ENCODE measurements at regions of chr1 and their contacts with region 1.

Region 1: GRCh38 chr1:2044510-2045319 is 5.5 kb upstream of the PRKCZ start:
- DNase-seq: peak; percentile 80
- ATAC-seq: peak; percentile 9
- H3K4me3 Mint-ChIP-seq: peak overlapping the region; percentile 27
- H3K27ac Mint-ChIP-seq: no peak overlapping the region
- H3K4me1 Mint-ChIP-seq: peaks cover 23% of the 10 kb centered on the region
- H3K27me3 Mint-ChIP-seq: peaks cover 13% of the 10 kb centered on the region; the same call in 1 of the 2 replicates
- CTCF ChIP-seq: peak; percentile 94

Region 2: DNA sequence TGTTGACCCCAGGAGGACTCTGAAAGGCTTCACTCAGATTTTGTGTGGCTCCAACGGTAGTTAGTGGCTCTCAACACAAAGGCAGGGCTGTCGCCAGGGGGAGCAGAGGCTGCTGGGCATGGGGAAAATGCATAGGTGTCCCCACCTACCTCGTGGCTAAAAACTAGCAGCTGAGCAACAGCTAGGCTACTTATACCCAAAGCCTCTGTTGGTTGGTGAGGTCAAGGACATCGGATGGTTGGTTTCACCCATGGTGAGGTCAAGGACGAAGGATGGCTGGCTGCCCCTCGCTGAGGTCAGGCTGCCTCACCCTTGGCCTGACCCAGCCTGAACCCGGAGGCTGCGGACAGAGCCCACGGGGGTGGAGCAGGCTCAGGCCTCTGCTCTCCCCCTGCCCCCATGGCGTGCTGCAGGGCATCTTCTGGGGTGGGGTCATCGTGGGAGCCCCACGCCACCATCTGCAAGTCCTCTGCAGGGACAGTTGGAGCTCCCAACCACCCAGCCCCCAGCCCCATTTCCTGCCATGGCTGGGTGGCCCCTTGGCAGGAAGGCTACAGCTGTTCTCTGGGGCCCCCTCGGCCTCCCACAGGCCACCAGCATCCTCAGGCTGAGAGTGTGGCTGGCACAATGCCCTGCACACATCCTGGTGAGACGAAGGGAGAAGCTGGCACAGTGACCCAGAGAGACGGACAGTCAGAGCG is 145.3 kb before region 1 on chr1:
- CTCF ChIA-PET with region 1: interaction called, 14 read pairs
- POLR2A ChIA-PET with region 1: no interaction called
- DNase-seq: no peak
- ATAC-seq: peak; percentile 35
- H3K4me3 Mint-ChIP-seq: no peak overlapping the region
- H3K27ac Mint-ChIP-seq: no peak overlapping the region
- H3K4me1 Mint-ChIP-seq: peaks cover 13% of the 10 kb centered on the region
- H3K27me3 Mint-ChIP-seq: peaks cover 2% of the 10 kb centered on the region; the same call in 1 of the 2 replicates
- CTCF ChIP-seq: no peak

Region 3: DNA sequence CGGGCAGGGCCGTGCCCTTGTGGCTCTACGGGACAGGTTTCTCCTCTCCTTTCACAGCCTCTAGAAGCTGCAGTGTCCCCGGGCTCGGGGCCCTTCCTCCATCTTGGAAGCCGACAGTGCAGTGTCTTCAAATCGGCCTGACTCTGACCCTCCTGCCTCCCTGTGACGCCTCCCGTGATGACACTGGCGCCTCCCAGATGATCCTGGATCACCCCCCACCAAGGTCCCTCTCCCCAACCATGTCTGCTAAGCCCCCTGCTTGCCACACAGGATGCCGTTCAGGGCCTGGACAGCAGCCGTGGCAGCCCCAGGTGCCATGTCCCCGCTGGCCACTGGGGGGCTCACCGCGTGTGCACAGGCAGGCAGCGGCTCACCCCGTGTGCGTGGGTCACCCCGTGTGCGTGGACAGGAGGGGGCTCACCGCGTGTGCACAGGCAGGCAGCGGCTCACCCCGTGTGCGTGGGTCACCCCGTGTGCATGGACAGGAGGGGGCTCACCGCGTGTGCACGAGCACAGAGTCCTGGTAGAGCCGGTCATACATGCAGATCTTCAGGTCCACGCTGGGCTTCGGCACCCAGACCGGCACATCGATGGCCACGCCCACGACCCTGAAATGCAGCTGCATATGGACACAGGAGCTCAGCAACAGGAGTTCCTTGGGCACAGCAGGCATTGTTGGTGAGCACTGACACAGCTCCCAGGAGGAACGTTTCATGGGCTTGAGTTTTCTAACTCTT is 100.7 kb before region 1 on chr1:
- CTCF ChIA-PET with region 1: interaction called, 80 read pairs
- POLR2A ChIA-PET with region 1: interaction called, 5 read pairs
- DNase-seq: peak; percentile 85
- ATAC-seq: peak; percentile 94
- H3K4me3 Mint-ChIP-seq: peak overlapping the region; percentile 43
- H3K27ac Mint-ChIP-seq: no peak overlapping the region; the same call in 1 of the 2 replicates
- H3K4me1 Mint-ChIP-seq: peaks cover 4% of the 10 kb centered on the region; the same call in 1 of the 2 replicates
- H3K27me3 Mint-ChIP-seq: no peaks in the 10 kb centered on the region
- CTCF ChIP-seq: peak; percentile 91

Region 4: GRCh38 chr1:1989102-1989542 is 55.6 kb before region 1 on chr1:
- CTCF ChIA-PET with region 1: interaction called, 10 read pairs
- POLR2A ChIA-PET with region 1: no interaction called
- DNase-seq: no peak
- ATAC-seq: no peak
- H3K4me3 Mint-ChIP-seq: no peak overlapping the region
- H3K27ac Mint-ChIP-seq: peak overlapping the region; percentile 11; the same call in 1 of the 2 replicates
- H3K4me1 Mint-ChIP-seq: no peaks in the 10 kb centered on the region
- H3K27me3 Mint-ChIP-seq: no peaks in the 10 kb centered on the region; the same call in 1 of the 2 replicates
- CTCF ChIP-seq: no peak

Region 5: GRCh38 chr1:2025534-2025981 is 19.2 kb before region 1 on chr1:
- CTCF ChIA-PET with region 1: interaction called, 89 read pairs
- POLR2A ChIA-PET with region 1: no interaction called
- DNase-seq: no peak
- ATAC-seq: no peak
- H3K4me3 Mint-ChIP-seq: no peak overlapping the region
- H3K27ac Mint-ChIP-seq: no peak overlapping the region
- H3K4me1 Mint-ChIP-seq: no peaks in the 10 kb centered on the region
- H3K27me3 Mint-ChIP-seq: peaks cover 9% of the 10 kb centered on the region
- CTCF ChIP-seq: no peak

Region 6: GRCh38 chr1:2133039-2133878 is 88.5 kb after region 1 on chr1:
- CTCF ChIA-PET with region 1: interaction called, 11 read pairs
- POLR2A ChIA-PET with region 1: no interaction called
- DNase-seq: peak; percentile 99
- ATAC-seq: peak; percentile 91
- H3K4me3 Mint-ChIP-seq: peak overlapping the region; percentile 58
- H3K27ac Mint-ChIP-seq: peak overlapping the region; percentile 97
- H3K4me1 Mint-ChIP-seq: peaks cover 20% of the 10 kb centered on the region
- H3K27me3 Mint-ChIP-seq: no peaks in the 10 kb centered on the region; the same call in 1 of the 2 replicates
- CTCF ChIP-seq: no peak